Natural killer cell (primary cell): ENCODE measurements at regions of chr12 and their contacts with region 1.

Region 1: GRCh38 chr12:49740930-49741881 is at the start of gene TMBIM6:
- DNase-seq: peak; percentile 97 to 100
- ATAC-seq: peak; percentile 82 to 95 (median 85)
- H3K4me3 ChIP-seq: peak within 1 kb of the TSS; percentile 57
- H3K4me3 Mint-ChIP-seq: peak within 1 kb of the TSS; percentile 96
- H3K27ac ChIP-seq: peak within 1 kb of the TSS; percentile 89
- H3K27ac Mint-ChIP-seq: peak within 1 kb of the TSS; percentile 98 to 100
- H3K4me1 ChIP-seq: peaks cover 27% of the 10 kb centered on the region
- H3K4me1 Mint-ChIP-seq: peaks cover 42 to 44% of the 10 kb centered on the region in 2 donors
- H3K27me3 ChIP-seq: no peaks in the 10 kb centered on the region
- H3K27me3 Mint-ChIP-seq: peaks cover 0 to 5% of the 10 kb centered on the region in 2 donors
- CTCF ChIP-seq: peak; percentile 87
- total RNA-seq, gene TMBIM6: 326 to 375 (median 366) TPM

Region 2: DNA sequence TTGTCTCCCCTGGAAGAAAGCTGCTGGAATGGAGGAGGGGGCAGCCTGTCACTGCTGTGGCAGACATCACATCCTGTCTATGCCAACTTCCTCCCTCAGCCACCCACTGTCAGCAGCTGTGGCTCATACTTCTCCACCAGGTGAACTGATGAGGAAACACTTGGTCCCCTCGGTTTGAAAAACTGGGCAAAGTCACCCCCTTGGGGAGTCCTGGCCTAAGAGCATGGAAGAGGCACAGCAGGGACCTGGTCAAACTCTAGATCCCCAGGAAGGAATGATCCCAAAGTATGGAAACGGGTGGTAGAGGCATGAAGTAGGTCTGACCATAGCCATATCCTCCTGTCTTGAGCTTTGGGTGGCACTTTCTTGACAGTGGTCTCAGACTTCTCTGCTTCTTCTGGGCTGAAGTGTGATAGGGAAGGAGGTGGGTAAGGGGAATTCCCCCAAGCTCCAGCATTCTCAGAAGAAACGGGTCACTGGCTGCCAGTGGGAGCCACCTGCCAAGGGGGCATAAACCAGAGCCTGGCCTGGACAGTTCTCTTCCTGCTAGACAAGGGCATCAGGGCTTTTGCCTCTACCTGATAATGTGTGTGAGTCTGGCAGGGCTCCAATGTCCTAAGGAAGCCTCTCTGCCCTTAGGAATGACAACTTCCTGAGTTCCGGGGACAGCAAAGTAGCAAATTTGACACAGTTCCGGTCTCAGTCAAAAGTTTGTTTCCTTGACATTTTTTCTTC is 70.0 kb before region 1 on chr12:
- intact Hi-C with region 1: loop called (anchors 2 kb)
- DNase-seq: peak; percentile 48 to 87
- ATAC-seq: peak; percentile 73 to 84 (median 82)
- H3K4me3 ChIP-seq: no peak overlapping the region
- H3K4me3 Mint-ChIP-seq: peak overlapping the region; percentile 74
- H3K27ac ChIP-seq: peak overlapping the region; percentile 91
- H3K27ac Mint-ChIP-seq: peak overlapping the region; percentile 89 to 92
- H3K4me1 ChIP-seq: peaks cover 66% of the 10 kb centered on the region
- H3K4me1 Mint-ChIP-seq: peaks cover 82 to 97% of the 10 kb centered on the region in 2 donors
- H3K27me3 ChIP-seq: no peaks in the 10 kb centered on the region
- H3K27me3 Mint-ChIP-seq: no peaks in the 10 kb centered on the region
- CTCF ChIP-seq: no peak

Region 3: GRCh38 chr12:49763006-49763591 is 21.9 kb after region 1 on chr12:
- intact Hi-C with region 1: loop called (anchors 1 kb)
- DNase-seq: peak; percentile 74 to 90
- ATAC-seq: peak; percentile 85 to 92 (median 88)
- H3K4me3 ChIP-seq: no peak overlapping the region
- H3K4me3 Mint-ChIP-seq: peak overlapping the region; percentile 6
- H3K27ac ChIP-seq: peak overlapping the region; percentile 40
- H3K27ac Mint-ChIP-seq: peak overlapping the region; percentile 80 to 88
- H3K4me1 ChIP-seq: peaks cover 21% of the 10 kb centered on the region
- H3K4me1 Mint-ChIP-seq: peaks cover 38 to 40% of the 10 kb centered on the region in 2 donors
- H3K27me3 ChIP-seq: no peaks in the 10 kb centered on the region
- H3K27me3 Mint-ChIP-seq: no peaks in the 10 kb centered on the region
- CTCF ChIP-seq: peak; percentile 82

Region 4: GRCh38 chr12:49828133-49829091 is 87.2 kb after region 1 on chr12 and contains the start of gene NCKAP5L:
- intact Hi-C with region 1: loop called (anchors 1 kb)
- DNase-seq: peak; percentile 90 to 96
- ATAC-seq: peak; percentile 95 to 98 (median 96)
- H3K4me3 ChIP-seq: peak within 1 kb of the TSS; percentile 48
- H3K4me3 Mint-ChIP-seq: peak within 1 kb of the TSS; percentile 93
- H3K27ac ChIP-seq: peak within 1 kb of the TSS; percentile 39
- H3K27ac Mint-ChIP-seq: peak within 1 kb of the TSS; percentile 85 to 86
- H3K4me1 ChIP-seq: peaks cover 41% of the 10 kb centered on the region
- H3K4me1 Mint-ChIP-seq: peaks cover 22 to 34% of the 10 kb centered on the region in 2 donors
- H3K27me3 ChIP-seq: no peaks in the 10 kb centered on the region
- H3K27me3 Mint-ChIP-seq: peaks cover 0 to 8% of the 10 kb centered on the region in 2 donors
- CTCF ChIP-seq: no peak
- total RNA-seq, gene NCKAP5L: 16.7 to 19.3 (median 16.8) TPM

Region 5: DNA sequence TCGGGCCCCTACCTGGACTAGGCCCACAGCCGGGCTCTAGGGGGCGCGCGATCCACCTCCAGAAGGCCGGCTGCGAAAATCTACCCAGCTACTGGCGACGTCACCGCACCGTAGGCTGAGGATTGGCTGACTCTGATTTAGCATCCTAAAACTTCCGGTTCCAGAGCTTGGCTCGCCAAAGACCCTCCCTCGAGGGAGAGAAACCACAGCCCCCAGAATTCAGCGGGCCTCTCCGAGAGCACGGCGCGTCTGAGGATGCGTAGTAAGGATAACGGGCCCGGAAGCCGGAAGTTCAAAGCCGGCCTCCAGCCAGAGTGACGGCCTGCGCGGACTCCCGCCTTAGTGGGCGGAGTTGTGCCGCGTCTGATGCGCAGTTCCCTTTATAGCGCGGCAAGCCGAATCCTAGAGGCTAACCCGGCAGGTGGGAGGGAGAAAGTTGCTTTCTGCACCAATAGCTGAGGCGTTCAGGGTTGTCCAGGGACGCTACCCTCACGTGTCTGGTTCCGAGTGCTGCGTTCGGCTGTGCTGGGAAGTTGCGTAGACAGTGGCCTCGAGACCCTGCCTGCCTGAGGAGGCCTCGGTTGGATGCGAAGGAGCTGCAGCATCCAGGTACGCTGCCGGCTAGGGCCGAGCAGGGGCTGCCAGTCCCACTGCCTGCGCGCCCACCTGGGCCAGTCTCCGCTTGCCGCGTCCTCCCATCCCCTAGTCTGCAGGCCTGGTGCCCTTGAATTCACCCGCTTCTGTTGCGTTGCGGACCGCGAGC is 370.7 kb after region 1 on chr12 and contains the start of gene COX14:
- intact Hi-C with region 1: loop called (anchors 5 kb)
- DNase-seq: peak; percentile 99 to 100
- ATAC-seq: peak; percentile 83 to 93 (median 85)
- H3K4me3 ChIP-seq: peak within 1 kb of the TSS; percentile 97
- H3K4me3 Mint-ChIP-seq: peak within 1 kb of the TSS; percentile 99
- H3K27ac ChIP-seq: peak within 1 kb of the TSS; percentile 93
- H3K27ac Mint-ChIP-seq: peak within 1 kb of the TSS; percentile 89 to 96
- H3K4me1 ChIP-seq: peaks cover 33% of the 10 kb centered on the region
- H3K4me1 Mint-ChIP-seq: peaks cover 28 to 37% of the 10 kb centered on the region in 2 donors
- H3K27me3 ChIP-seq: no peaks in the 10 kb centered on the region
- H3K27me3 Mint-ChIP-seq: no peaks in the 10 kb centered on the region
- CTCF ChIP-seq: peak; percentile 89
- total RNA-seq, gene COX14: 32.8 to 42.6 (median 36.7) TPM